Activated CD8-positive, alpha-beta T cell treated with anti-CD3 and anti-CD28 coated beads for 36 hours (primary cell): ENCODE measurements at regions of chr12 and their contacts with region 1.

Region 1: DNA sequence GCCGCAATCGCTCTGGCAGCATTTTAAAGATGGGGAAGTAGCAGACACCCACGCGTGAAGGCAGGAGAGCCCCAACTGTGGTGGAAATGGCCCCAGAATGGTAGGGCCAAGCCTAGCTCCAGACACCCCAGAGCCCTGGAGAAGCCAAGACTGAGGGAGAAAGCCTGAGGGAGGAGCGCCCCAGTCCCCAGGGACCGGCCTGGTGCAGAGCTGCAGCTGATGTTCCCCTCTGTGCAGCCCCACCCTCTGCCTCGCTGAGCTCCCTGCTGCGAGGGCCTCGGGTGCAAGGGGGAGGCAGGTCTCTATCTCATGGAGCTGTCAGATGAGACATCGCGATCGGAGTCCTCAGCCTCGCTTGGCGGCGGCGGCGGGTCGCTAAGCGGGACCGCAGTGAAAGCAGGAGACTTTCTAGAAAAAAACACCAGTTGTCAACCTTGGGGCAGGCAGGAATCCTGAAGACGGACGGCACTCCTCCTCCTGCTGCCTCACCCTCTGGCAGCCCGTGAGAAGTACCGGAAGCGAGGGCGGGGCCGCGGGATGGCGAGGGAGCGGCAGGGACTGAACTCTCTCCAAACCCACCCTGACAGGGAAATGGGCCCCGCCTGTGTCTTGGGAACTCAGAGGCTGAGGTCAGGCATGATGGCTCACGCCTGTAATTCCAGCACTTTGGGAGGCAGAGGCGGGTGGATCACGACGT is 6.0 kb downstream of the GAPDH start:
- DNase-seq: peak; percentile 59
- ATAC-seq: peak; percentile 32
- H3K4me3 Mint-ChIP-seq: peak overlapping the region; percentile 41
- H3K27ac Mint-ChIP-seq: peak overlapping the region; percentile 71
- H3K4me1 Mint-ChIP-seq: peaks cover 41% of the 10 kb centered on the region
- H3K27me3 Mint-ChIP-seq: no peaks in the 10 kb centered on the region
- CTCF ChIP-seq: no peak

Region 2: GRCh38 chr12:6493497-6494257 is 46.7 kb before region 1 on chr12 and contains the start of gene NCAPD2:
- CTCF ChIA-PET with region 1: interaction called, 10 read pairs
- POLR2A ChIA-PET with region 1: interaction called, 15 read pairs
- intact Hi-C with region 1: no loop called
- DNase-seq: peak; percentile 98
- ATAC-seq: peak; percentile 88
- H3K4me3 Mint-ChIP-seq: peak within 1 kb of the TSS; percentile 99
- H3K27ac Mint-ChIP-seq: peak within 1 kb of the TSS; percentile 99
- H3K4me1 Mint-ChIP-seq: peaks cover 31% of the 10 kb centered on the region
- H3K27me3 Mint-ChIP-seq: no peaks in the 10 kb centered on the region
- CTCF ChIP-seq: no peak
- total RNA-seq, gene NCAPD2: 195 to 196 TPM

Region 3: DNA sequence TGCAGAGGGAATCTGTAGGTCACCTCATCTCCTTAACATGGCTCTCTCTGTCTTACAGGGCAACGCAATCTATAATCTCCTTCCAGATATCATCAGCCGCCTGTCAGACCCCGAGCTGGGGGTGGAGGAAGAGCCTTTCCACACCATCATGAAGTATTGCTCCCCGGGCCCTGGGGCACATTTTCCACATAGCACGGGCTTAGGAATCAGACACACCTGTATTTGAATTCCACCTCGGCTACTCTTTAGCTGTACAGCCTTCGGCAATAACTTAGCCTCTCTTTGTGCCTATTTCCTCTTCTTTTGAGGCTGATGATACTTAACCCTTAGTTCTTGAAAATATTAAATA is 11.5 kb before region 1 on chr12:
- CTCF ChIA-PET with region 1: interaction called, 13 read pairs
- POLR2A ChIA-PET with region 1: interaction called, 264 read pairs
- intact Hi-C with region 1: no loop called
- DNase-seq: no peak
- ATAC-seq: no peak
- H3K4me3 Mint-ChIP-seq: no peak overlapping the region
- H3K27ac Mint-ChIP-seq: peak overlapping the region; percentile 23
- H3K4me1 Mint-ChIP-seq: peaks cover 16% of the 10 kb centered on the region
- H3K27me3 Mint-ChIP-seq: no peaks in the 10 kb centered on the region
- CTCF ChIP-seq: no peak

Region 4: GRCh38 chr12:6554168-6555017 is 14.1 kb after region 1 on chr12:
- CTCF ChIA-PET with region 1: interaction called, 68 read pairs
- POLR2A ChIA-PET with region 1: interaction called, 264 read pairs
- intact Hi-C with region 1: no loop called
- DNase-seq: peak; percentile 89
- ATAC-seq: peak; percentile 76
- H3K4me3 Mint-ChIP-seq: peak overlapping the region; percentile 89
- H3K27ac Mint-ChIP-seq: peak overlapping the region; percentile 51
- H3K4me1 Mint-ChIP-seq: peaks cover 50% of the 10 kb centered on the region
- H3K27me3 Mint-ChIP-seq: no peaks in the 10 kb centered on the region
- CTCF ChIP-seq: peak; percentile 62

Region 5: GRCh38 chr12:6563448-6564050 is 23.2 kb after region 1 on chr12:
- CTCF ChIA-PET with region 1: interaction called, 19 read pairs
- POLR2A ChIA-PET with region 1: interaction called, 264 read pairs
- intact Hi-C with region 1: no loop called
- DNase-seq: peak; percentile 85
- ATAC-seq: peak; percentile 33
- H3K4me3 Mint-ChIP-seq: no peak overlapping the region
- H3K27ac Mint-ChIP-seq: peak overlapping the region; percentile 4
- H3K4me1 Mint-ChIP-seq: peaks cover 47% of the 10 kb centered on the region
- H3K27me3 Mint-ChIP-seq: no peaks in the 10 kb centered on the region
- CTCF ChIP-seq: peak; percentile 76

Region 6: DNA sequence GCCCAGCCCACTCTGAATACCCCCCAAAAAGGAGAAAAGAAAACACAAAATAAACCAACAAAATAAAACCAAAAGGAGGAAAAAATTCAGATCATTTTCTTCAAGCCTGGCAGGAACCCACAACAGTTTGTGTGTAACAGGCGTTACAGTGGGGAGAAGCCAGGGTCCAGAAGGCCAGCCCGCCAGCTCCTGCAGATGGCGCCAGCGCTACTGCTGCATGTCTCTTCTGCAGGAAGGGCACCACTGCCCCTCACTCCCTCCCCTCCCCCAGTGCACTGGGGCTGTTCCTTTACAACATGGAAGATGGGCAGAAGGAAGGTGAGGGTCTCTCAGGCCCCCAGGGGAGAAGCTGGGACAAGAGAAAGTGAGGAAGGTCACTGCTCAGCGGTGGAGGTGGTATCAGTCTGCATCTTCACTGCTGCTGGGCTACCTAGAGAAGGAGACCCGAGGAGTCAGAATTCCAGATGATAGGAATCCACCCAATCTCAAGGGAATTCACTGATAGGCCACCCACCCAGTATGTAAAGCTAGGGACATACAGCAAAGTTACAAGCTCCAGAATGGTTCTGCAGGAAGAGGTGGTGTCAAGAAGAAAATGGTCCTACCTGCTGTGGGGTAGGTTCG is 30.0 kb after region 1 on chr12:
- CTCF ChIA-PET with region 1: interaction called, 6 read pairs
- POLR2A ChIA-PET with region 1: interaction called, 26 read pairs
- intact Hi-C with region 1: no loop called
- DNase-seq: peak; percentile 73
- ATAC-seq: peak; percentile 29
- H3K4me3 Mint-ChIP-seq: no peak overlapping the region
- H3K27ac Mint-ChIP-seq: peak overlapping the region; percentile 10
- H3K4me1 Mint-ChIP-seq: peaks cover 44% of the 10 kb centered on the region
- H3K27me3 Mint-ChIP-seq: no peaks in the 10 kb centered on the region
- CTCF ChIP-seq: peak; percentile 76

Region 7: GRCh38 chr12:6788972-6789924 is 248.9 kb after region 1 on chr12 and contains the start of gene CD4:
- CTCF ChIA-PET with region 1: no interaction called
- POLR2A ChIA-PET with region 1: no interaction called
- intact Hi-C with region 1: no loop called
- DNase-seq: peak; percentile 67
- ATAC-seq: peak; percentile 38
- H3K4me3 Mint-ChIP-seq: peak within 1 kb of the TSS; percentile 52
- H3K27ac Mint-ChIP-seq: no peak within 1 kb of the TSS
- H3K4me1 Mint-ChIP-seq: peaks cover 68% of the 10 kb centered on the region
- H3K27me3 Mint-ChIP-seq: peaks cover 2% of the 10 kb centered on the region
- CTCF ChIP-seq: no peak
- total RNA-seq, gene CD4: 11.1 to 14.1 TPM